Posterior cingulate gyrus (tissue), 11 donors: ENCODE measurements at regions of chr14 and their contacts with region 1.

Region 1: DNA sequence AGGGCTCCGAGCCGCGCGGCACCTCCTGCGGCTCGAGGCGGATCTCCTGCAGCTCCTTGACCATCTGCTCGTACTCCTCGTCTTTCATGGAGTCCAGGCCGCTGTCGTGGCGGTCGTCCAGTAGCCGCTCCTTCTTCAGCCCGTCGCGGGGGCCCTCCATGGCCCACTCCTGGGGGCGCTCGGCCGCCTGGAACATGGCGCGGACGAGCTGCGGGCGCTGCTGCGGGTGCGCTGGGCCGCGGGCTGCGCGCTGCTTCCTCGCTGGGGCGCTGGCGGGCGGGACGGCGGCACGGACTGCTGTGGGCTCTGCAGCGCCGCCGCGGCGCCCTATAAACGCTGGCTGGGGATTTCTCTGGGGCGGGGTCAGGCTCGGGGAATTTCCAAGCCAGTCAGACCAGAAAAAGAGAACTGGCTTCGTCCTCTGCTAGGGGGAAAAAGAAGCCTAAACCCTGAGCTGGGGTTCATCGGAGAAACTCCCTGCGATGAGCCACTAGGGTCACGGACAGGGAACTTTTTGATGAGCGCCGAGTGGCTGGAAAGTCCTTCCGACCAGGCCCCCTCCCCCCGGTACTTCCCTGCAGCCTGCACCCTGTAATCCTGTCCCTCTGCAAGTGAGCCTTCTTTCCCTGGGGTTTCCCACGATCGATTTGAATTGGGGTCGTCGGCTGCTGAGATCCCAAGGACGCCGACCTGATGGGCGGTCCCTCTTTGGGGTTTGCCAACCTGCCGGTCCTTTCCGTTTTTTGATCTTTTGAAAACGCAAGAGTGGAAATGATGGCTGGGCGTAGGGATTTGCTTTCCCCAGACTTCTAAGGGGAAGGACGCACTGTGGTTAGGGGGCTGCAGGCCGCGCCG is at the start of gene NFKBIA:
- DNase-seq: peak; percentile 82 to 98 (median 90)

Region 2: DNA sequence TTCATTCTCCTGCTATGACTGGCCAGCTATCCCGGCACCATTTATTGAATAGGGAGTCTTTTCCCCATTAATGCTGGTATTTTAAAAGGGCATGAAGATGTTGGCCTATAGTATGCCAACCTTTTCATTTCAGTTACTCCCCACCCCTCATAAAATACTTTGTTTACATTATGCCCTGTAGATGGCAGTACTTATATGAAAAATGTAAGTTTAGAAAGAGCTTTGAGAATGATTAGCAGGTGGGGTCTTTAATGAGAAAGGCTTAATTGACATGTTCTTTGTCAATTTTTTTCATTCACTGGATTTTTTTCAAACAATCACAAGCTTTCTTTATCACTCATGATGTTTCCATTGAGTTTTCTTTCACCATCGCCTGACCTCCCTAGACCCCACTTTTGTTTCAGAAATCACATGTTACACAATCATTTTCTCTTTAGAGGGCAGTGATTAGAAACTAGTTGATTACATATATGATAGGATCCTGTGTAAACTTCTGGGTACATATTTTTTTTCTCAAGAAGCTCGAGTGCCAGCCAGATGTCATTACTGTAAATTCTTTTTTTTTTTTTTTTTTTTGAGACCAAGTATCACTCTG is 175.1 kb before region 1 on chr14:
- intact Hi-C with region 1: loop called (anchors 5 kb)
- DNase-seq: no peak

Region 3: GRCh38 chr14:35292051-35292769 is 112.5 kb before region 1 on chr14 and contains the start of gene PSMA6:
- intact Hi-C with region 1: loop called (anchors 1 kb)
- DNase-seq: peak; percentile 99 to 100 (median 100)

Region 4: DNA sequence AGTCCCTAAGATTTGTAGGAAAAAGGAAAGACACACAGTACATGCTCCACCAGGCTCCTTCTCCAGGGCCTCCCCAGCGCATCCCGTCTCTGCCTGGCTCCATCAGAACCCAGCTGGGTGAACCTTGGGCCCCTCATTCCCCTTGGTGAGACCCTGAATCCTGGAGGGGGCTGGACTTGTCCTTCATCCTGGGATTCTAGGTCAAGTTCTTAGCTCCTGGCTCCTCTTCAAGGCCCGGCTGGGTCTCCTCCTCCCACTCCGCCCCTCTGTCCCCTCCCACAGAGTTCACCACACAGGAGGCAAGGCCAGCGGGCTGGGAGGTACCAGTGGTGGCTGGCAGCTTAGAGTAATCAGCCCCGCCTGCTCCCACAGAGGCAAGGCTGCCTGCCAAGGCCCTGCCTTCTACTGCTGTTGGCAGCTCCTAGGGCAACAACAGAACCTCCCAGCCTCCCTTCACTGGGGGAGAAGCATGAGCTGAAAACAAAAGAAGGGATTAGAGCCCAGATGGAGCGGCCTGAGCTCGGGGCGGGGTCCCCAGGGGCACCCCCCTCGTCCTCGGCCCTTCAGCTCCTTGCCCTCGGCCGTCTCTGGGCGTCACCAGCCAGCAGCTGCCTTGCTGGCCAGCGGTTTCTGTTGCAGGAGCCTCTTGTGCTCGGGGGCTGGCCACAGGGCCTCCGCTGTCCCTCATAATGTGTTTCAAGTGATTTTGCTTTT is 63.1 kb before region 1 on chr14:
- intact Hi-C with region 1: loop called (anchors 1 kb)
- DNase-seq: peak; percentile 89 to 98 (median 94)